ENCODE measurements at regions of chr2 and their contacts with region 1.

Region 1: GRCh38 chr2:225041851-225042799 is at the start of gene DOCK10:
- DNase-seq: peak; percentile 76
- ATAC-seq: peak; percentile 20
- H3K4me3 Mint-ChIP-seq: peak within 1 kb of the TSS; percentile 97
- H3K27ac Mint-ChIP-seq: peak within 1 kb of the TSS; percentile 98
- H3K4me1 Mint-ChIP-seq: peaks cover 50% of the 10 kb centered on the region
- H3K27me3 Mint-ChIP-seq: peaks cover 3% of the 10 kb centered on the region
- total RNA-seq, gene DOCK10: 177 to 196 TPM

Region 2: GRCh38 chr2:224025874-224026273 is 1016.3 kb before region 1 on chr2:
- CTCF ChIA-PET with region 1: no interaction called
- POLR2A ChIA-PET with region 1: no interaction called
- intact Hi-C with region 1: loop called in 1 of 2 experiments (anchors 10 kb)
- DNase-seq: peak; percentile 81
- ATAC-seq: peak; percentile 94
- H3K4me3 Mint-ChIP-seq: peak overlapping the region; percentile 50
- H3K27ac Mint-ChIP-seq: peak overlapping the region; percentile 94
- H3K4me1 Mint-ChIP-seq: peaks cover 72% of the 10 kb centered on the region
- H3K27me3 Mint-ChIP-seq: no peaks in the 10 kb centered on the region

Region 3: GRCh38 chr2:224875841-224876240 is 166.3 kb before region 1 on chr2:
- CTCF ChIA-PET with region 1: no interaction called
- POLR2A ChIA-PET with region 1: no interaction called
- intact Hi-C with region 1: no loop called
- DNase-seq: no peak
- ATAC-seq: no peak
- H3K4me3 Mint-ChIP-seq: no peak overlapping the region
- H3K27ac Mint-ChIP-seq: peak overlapping the region; percentile 21
- H3K4me1 Mint-ChIP-seq: peaks cover 18% of the 10 kb centered on the region
- H3K27me3 Mint-ChIP-seq: no peaks in the 10 kb centered on the region

Region 4: GRCh38 chr2:224885836-224886547 is 156.1 kb before region 1 on chr2:
- CTCF ChIA-PET with region 1: no interaction called
- POLR2A ChIA-PET with region 1: no interaction called
- intact Hi-C with region 1: loop called in 1 of 2 experiments (anchors 1 kb)
- DNase-seq: no peak
- ATAC-seq: peak; percentile 81
- H3K4me3 Mint-ChIP-seq: peak overlapping the region; percentile 24
- H3K27ac Mint-ChIP-seq: peak overlapping the region; percentile 76
- H3K4me1 Mint-ChIP-seq: peaks cover 65% of the 10 kb centered on the region
- H3K27me3 Mint-ChIP-seq: no peaks in the 10 kb centered on the region

Region 5: DNA sequence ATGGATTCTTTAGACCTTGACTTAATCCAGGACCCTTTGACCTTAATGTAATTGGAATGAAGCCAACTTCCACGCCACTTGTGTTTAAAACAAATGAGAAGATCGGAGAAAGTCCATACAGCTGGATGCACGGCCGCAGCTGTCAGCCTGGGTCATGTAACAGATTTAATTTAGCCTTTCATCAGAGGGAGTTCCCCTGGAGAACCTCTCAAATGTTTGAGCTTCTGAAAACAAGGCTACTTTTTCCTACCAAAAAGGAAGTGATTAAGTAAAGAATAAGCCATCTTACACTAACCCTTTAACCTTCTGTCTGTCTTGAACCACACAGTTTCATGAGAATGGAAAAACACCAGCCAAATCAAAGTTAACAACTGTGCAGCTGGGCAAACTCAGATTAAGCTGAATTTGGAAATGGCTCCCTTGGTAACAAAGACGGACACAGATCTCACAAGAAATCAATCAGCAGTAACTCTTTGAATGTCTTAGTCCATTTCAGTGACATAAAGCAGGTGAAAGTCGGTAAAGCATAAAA is 103.4 kb before region 1 on chr2:
- CTCF ChIA-PET with region 1: no interaction called
- POLR2A ChIA-PET with region 1: no interaction called
- intact Hi-C with region 1: loop called (anchors 2 kb)
- DNase-seq: peak; percentile 54
- ATAC-seq: peak; percentile 72
- H3K4me3 Mint-ChIP-seq: peak overlapping the region; percentile 68
- H3K27ac Mint-ChIP-seq: peak overlapping the region; percentile 92
- H3K4me1 Mint-ChIP-seq: peaks cover 85% of the 10 kb centered on the region
- H3K27me3 Mint-ChIP-seq: no peaks in the 10 kb centered on the region

Region 6: GRCh38 chr2:225008935-225009334 is 33.2 kb before region 1 on chr2:
- CTCF ChIA-PET with region 1: interaction called, 33 read pairs
- POLR2A ChIA-PET with region 1: interaction called, 3 read pairs
- intact Hi-C with region 1: loop called (anchors 1 to 2 kb)
- DNase-seq: peak; percentile 43
- ATAC-seq: no peak
- H3K4me3 Mint-ChIP-seq: no peak overlapping the region
- H3K27ac Mint-ChIP-seq: peak overlapping the region; percentile 70
- H3K4me1 Mint-ChIP-seq: peaks cover 93% of the 10 kb centered on the region
- H3K27me3 Mint-ChIP-seq: no peaks in the 10 kb centered on the region

Region 7: GRCh38 chr2:225052703-225053102 is 10.6 kb after region 1 on chr2:
- CTCF ChIA-PET with region 1: interaction called, 12 read pairs
- POLR2A ChIA-PET with region 1: interaction called, 3 read pairs
- intact Hi-C with region 1: no loop called
- DNase-seq: peak; percentile 24
- ATAC-seq: peak; percentile 91
- H3K4me3 Mint-ChIP-seq: no peak overlapping the region
- H3K27ac Mint-ChIP-seq: peak overlapping the region; percentile 70
- H3K4me1 Mint-ChIP-seq: peaks cover 41% of the 10 kb centered on the region
- H3K27me3 Mint-ChIP-seq: no peaks in the 10 kb centered on the region

Region 8: DNA sequence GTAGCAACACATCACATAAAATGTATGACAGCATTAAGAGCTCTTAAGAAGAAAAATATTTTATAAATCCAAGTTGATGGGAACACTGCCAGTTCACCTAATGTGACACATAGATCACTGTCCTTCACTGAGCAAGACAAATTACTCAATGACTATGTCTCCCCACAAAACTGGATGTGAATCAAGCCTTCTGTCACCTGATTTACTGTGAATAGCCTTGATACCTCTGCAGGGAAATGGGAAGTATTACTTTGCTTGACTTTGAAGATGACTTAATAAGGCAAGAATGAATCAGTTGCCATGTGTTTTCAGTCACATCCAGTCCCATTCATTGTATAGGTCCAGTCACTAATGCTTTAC is 452.0 kb after region 1 on chr2:
- CTCF ChIA-PET with region 1: no interaction called
- POLR2A ChIA-PET with region 1: no interaction called
- intact Hi-C with region 1: no loop called
- DNase-seq: no peak
- ATAC-seq: peak; percentile 64
- H3K4me3 Mint-ChIP-seq: no peak overlapping the region
- H3K27ac Mint-ChIP-seq: no peak overlapping the region
- H3K4me1 Mint-ChIP-seq: peaks cover 2% of the 10 kb centered on the region
- H3K27me3 Mint-ChIP-seq: peaks cover 4% of the 10 kb centered on the region

Measured in activated CD4-positive, alpha-beta T cell treated with anti-CD3 and anti-CD28 coated beads for 36 hours (primary cell).